ENCODE measurements at regions of chr16 and their contacts with region 1.

Region 1: GRCh38 chr16:89873972-89874689 is 739 bp downstream of the TCF25 start:
- DNase-seq: peak; percentile 99

Region 2: DNA sequence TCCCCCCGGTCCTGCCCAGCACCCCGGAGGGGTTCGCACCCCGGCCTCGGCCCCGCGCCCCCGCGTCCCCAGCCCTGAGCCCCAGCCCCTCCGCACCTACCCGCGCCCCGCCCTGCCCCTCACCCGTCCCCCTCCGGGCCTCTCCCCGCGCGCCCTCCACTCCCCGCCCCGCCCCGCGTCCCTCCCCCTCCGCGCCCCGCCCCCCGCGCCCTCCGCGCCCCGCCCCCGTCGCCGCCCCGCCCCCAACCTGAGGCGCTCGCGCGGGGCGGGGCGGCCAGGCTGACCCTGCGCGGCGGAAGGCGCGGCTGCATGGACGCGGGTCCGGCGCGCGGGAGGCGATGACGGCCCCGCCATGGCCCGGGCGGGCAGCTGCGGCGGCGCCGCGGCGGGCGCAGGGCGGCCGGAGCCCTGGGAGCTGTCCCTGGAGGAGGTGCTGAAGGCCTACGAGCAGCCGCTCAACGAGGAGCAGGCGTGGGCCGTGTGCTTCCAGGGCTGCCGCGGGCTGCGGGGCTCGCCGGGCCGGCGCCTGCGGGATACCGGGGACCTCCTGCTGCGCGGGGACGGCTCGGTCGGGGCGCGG is 45.8 kb before region 1 on chr16 and contains the start of gene SPIRE2:
- CTCF ChIA-PET with region 1: no interaction called
- POLR2A ChIA-PET with region 1: interaction called, 14 read pairs
- DNase-seq: peak; percentile 77

Region 3: GRCh38 chr16:89860747-89861304 is 13.3 kb before region 1 on chr16:
- CTCF ChIA-PET with region 1: interaction called, 4 read pairs
- POLR2A ChIA-PET with region 1: interaction called, 30 read pairs
- DNase-seq: peak; percentile 84

Region 4: GRCh38 chr16:89909777-89910716 is 35.9 kb after region 1 on chr16:
- CTCF ChIA-PET with region 1: interaction called, 3 read pairs
- POLR2A ChIA-PET with region 1: interaction called, 14 read pairs
- DNase-seq: peak; percentile 84

Region 5: GRCh38 chr16:89922884-89923690 is 49.0 kb after region 1 on chr16 and contains the start of gene TUBB3:
- CTCF ChIA-PET with region 1: interaction called, 6 read pairs
- POLR2A ChIA-PET with region 1: interaction called, 34 read pairs
- DNase-seq: peak; percentile 90